Esophagus muscularis mucosa (tissue), 4 donors: ENCODE measurements at regions of chr12 and their contacts with region 1.

Region 1: DNA sequence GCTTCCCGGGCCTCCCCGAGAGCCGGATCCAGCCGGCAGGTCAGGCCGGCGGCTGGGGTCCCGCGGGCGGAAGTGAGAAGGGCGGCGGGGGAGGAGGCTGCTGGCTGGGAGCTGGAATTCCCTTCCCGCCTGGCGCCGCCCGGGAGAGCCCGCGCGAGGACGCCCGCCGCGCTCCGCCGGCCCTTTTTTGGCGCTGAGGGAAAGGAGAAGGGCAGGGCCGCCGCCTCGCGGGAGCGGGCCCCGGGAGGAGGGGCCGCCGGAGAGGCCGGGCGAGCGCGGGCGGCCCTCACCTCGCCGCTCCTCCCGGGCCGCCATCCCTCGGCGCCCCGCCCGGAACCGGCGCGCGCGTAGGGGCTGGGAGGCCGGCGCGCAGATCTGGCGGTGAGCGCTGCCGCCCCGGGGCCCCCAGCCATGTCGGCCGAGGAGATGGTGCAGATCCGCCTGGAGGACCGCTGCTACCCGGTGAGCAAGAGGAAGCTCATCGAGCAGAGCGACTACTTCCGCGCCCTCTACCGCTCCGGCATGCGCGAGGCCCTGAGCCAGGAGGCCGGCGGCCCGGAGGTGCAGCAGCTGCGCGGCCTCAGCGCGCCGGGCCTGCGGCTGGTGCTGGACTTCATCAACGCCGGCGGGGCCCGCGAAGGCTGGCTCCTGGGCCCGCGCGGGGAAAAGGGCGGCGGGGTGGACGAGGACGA is at the starts of genes KLHL42 and MANSC4:
- DNase-seq: no peak
- H3K4me3 ChIP-seq: peak within 1 kb of the TSS; percentile 88 to 90 (median 88)
- H3K27ac ChIP-seq: peak within 1 kb of the TSS; percentile 95 to 97 (median 96)
- H3K4me1 ChIP-seq: peaks cover 22 to 55% (median 52%) of the 10 kb centered on the region in 4 donors
- H3K27me3 ChIP-seq: no peaks in the 10 kb centered on the region
- CTCF ChIP-seq: no peak
- EP300 ChIP-seq: no peak
- POLR2A ChIP-seq: peak; percentile 30
- total RNA-seq, gene KLHL42: 66.1 to 134 (median 91.0) TPM
- total RNA-seq, gene MANSC4: 0.39 TPM in 1 of 4 donors, not detected in the others

Region 2: DNA sequence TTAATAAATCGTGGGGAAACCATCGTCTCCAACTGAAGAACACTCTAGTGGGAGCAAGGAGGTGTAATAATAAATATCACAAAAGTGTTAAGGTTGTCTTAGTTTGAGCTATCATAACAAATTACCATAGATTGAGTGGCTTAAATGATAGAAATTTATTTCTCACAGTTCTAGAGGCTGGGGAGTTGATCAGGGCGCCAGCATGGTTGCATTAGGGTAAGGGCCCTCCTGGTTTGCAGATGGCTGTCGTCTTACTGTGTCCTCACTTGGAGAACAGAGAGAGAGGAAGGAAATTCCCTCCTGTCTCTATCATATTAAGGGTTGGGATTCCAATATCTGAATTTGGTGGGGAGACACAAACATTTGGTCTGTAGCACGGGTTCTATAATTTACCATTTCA is 36.5 kb before region 1 on chr12:
- intact Hi-C with region 1: loop called (anchors 5 kb)
- DNase-seq: no peak
- H3K4me3 ChIP-seq: no peak overlapping the region
- H3K27ac ChIP-seq: no peak overlapping the region
- H3K4me1 ChIP-seq: peaks cover 4 to 24% (median 21%) of the 10 kb centered on the region in 4 donors
- H3K27me3 ChIP-seq: no peaks in the 10 kb centered on the region
- CTCF ChIP-seq: no peak
- EP300 ChIP-seq: no peak
- POLR2A ChIP-seq: no peak